Activated T-helper 1 cell treated with anti-CD3 and anti-CD28 coated beads, Interleukin-12 subunit alpha, Interleukin-12 subunit beta, Interleukin-2, Interleukin-4 antibody, amounts not matched to agents 30 ng/mL and 10 ng/mL and 1 ng/mL, durations not matched to agents 14 hours and 24 hours and 36 hours (primary cell): ENCODE measurements at regions of chr5 and their contacts with region 1.

Region 1: DNA sequence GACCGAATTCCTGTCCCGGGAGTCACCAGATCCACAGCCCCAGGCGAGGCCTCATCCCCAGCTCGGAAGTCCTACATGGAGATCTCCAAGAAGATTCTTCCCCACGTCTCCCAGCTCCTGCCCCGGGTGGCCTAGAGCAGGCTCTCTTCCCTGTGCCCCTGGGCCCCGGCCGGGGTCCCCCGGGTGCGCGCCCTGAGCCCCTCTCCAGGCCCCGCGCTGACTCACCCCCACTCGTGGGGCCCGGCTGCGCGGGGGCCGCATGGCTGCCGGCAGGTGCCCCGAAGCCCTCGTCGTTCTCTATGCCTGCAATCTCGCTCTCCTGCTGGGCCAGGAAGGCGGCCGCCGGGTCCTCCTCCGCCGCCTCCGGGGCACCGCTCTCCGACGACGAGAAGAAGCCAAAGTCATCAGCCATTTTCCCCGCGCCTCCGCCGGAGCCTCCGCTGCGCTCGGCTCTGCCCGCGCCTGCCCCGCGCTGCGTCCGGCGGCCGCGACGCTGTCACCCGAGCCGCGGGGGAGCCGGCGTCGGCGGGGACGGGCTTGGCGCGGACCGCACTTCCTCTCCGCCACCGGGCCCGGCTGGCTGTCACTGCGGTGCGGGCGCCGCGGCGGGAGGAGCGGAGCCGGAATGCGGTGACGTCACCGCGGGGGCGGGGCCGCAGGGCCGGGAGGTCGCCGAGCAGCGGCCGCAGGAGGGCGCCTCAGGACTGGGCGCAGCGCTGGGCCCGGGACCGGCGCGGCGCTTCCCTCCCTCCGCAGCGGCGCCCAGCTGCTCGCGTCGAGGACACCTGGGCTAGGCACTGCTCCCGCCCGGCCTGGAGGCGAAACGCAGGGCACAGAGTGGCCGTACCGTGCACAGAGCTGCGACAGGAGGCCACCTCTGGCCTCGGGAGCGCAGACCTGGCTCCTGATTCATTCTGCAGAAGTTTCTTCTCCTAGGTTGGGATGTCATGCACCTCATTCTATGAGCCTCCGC is at the start of gene CLTB:
- DNase-seq: peak; percentile 76
- H3K4me3 Mint-ChIP-seq: peak within 1 kb of the TSS; percentile 84
- H3K27ac Mint-ChIP-seq: peak within 1 kb of the TSS; percentile 44
- H3K4me1 Mint-ChIP-seq: peaks cover 38% of the 10 kb centered on the region
- H3K27me3 Mint-ChIP-seq: peaks cover 14% of the 10 kb centered on the region
- total RNA-seq, gene CLTB: 71.6 and 84.0 TPM in 2 replicates

Region 2: DNA sequence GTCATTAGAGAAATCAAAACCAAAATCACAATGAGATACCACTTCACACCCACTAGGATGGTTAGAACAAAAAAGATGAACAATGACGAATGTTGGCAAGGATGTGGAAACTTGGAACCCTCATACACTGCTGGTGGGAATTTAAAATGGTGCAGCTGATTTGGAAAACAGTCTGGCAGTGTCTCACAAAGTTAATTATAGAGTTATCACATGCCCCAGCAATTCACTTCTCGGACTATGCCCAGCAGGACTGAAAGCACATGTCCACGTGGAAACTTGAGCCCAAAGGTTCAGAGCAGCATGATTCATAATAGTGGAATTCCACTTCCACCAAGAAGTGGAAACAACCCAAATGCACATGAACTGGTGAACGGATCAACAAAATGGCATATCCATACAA is 843.4 kb before region 1 on chr5:
- intact Hi-C with region 1: no loop called
- DNase-seq: no peak
- H3K4me3 Mint-ChIP-seq: no peak overlapping the region
- H3K27ac Mint-ChIP-seq: no peak overlapping the region
- H3K4me1 Mint-ChIP-seq: peaks cover 8% of the 10 kb centered on the region
- H3K27me3 Mint-ChIP-seq: peaks cover 15% of the 10 kb centered on the region

Region 3: GRCh38 chr5:176361437-176362232 is 54.6 kb before region 1 on chr5 and contains the start of gene KIAA1191:
- intact Hi-C with region 1: loop called (anchors 2 kb)
- DNase-seq: peak; percentile 93
- H3K4me3 Mint-ChIP-seq: peak within 1 kb of the TSS; percentile 97
- H3K27ac Mint-ChIP-seq: peak within 1 kb of the TSS; percentile 91
- H3K4me1 Mint-ChIP-seq: peaks cover 36% of the 10 kb centered on the region
- H3K27me3 Mint-ChIP-seq: no peaks in the 10 kb centered on the region
- total RNA-seq, gene KIAA1191: 60.9 and 63.4 TPM in 2 replicates

Region 4: DNA sequence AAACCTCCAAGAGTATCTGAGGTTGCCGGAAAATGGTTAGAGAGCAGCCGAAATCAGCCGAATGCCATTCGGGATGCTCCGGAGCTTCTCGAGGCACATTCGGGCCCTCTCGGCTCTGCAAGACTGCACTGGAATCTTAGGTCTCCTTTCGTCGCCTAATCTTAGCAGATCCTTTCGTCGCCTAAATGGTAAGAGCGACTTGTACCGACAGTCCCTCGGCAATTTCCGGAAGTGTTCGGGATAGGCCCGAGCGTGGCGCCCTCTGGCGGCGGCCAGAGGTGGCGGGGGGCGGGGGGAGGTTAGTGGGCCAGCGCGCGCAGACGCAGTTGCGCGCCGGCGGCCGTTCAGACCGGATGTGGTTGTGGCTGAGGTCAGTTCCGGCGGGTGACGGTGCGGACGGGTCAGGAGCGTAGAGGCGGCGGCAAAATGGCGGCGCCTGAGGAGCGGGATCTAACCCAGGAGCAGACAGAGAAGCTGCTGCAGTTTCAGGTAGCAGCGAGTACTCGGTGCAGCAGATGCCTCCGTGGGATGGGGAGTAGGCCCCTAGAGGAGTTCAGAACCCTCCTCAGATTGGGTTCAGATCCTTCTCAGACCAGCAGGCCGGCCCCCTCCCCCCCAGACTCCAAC is 31.9 kb after region 1 on chr5 and contains the start of gene FAF2:
- intact Hi-C with region 1: loop called (anchors 1 kb)
- DNase-seq: peak; percentile 99
- H3K4me3 Mint-ChIP-seq: peak within 1 kb of the TSS; percentile 97
- H3K27ac Mint-ChIP-seq: peak within 1 kb of the TSS; percentile 96
- H3K4me1 Mint-ChIP-seq: peaks cover 40% of the 10 kb centered on the region
- H3K27me3 Mint-ChIP-seq: peaks cover 2% of the 10 kb centered on the region
- total RNA-seq, gene FAF2: 46.0 and 47.3 TPM in 2 replicates

Region 5: GRCh38 chr5:176543428-176544173 is 127.4 kb after region 1 on chr5:
- intact Hi-C with region 1: loop called (anchors 1 kb)
- DNase-seq: peak; percentile 74
- H3K4me3 Mint-ChIP-seq: peak overlapping the region; percentile 95
- H3K27ac Mint-ChIP-seq: peak overlapping the region; percentile 95
- H3K4me1 Mint-ChIP-seq: peaks cover 51% of the 10 kb centered on the region
- H3K27me3 Mint-ChIP-seq: no peaks in the 10 kb centered on the region

Region 6: DNA sequence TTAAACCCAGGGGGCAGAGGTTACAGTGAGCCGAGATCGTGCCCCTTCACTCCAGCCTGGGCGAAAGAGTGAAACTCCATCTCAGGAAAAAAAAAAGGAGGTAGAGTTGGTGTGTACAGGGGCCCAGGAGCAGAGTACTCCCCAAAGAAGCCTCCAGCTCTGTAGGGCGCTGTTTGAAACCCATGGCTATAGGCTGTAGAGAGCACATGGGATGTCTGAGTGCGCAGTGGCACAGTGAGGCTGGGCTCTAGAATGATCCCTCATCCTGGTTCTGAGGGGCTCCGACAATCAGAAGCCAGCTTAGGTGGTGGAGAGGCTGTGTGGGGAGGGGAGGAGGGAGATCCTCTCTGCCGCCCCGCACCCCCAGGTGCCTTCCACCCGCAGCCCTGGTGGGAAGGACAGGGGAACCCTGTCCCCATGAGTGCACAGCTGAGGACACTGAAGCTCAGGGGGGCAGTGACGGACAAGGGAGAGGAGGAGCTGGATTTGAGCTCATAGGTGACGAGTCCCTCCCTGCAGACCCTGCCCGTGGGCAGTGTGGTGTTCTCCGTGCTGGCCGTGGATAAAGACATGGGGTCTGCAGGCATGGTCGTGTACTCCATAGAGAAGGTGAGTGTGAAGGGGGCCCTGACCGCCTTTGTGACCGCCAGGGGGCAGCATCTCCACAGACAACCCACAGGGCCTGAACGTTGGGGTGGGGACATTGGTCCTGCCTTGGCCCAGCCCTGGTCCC is 157.5 kb after region 1 on chr5:
- intact Hi-C with region 1: loop called (anchors 1 kb)
- DNase-seq: peak; percentile 58
- H3K4me3 Mint-ChIP-seq: no peak overlapping the region
- H3K27ac Mint-ChIP-seq: no peak overlapping the region
- H3K4me1 Mint-ChIP-seq: no peaks in the 10 kb centered on the region
- H3K27me3 Mint-ChIP-seq: peaks cover 5% of the 10 kb centered on the region

Region 7: DNA sequence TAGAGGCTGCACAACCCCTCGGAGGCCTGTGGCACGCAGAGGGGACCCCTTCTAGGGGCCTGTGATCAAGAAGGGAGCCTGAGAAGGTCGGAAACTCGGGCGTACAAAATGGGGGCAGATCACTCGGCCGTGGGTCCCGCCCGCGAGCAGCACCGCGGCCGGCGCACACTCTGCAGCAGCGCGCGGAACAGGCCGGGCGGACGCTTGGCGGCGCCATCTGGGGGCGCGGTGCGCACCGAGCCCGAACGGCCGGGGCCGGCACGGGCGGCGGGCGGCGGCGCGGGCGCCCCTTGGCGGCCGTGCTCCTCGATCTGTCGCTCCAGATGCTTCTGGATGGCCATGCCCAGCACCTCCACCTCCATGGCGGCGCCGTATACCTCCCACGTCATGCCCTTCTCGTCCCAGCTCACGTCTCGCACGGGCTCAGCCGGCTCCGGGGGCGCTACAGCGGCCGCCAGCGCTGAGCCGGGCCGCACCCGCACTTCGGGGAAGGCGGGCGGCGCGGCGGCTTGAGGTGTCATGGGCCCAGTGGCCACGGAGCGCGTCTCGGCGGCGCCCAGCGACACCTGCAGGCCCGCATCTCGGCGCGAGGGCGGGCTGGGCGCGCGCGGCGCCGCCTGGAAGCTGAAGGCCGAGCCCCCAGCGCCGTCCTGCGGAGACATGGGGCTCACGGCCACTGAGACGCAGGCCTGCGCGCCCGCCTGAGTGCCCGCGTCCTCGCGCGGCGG is 180.6 kb after region 1 on chr5:
- intact Hi-C with region 1: loop called (anchors 2 kb)
- DNase-seq: peak; percentile 58
- H3K4me3 Mint-ChIP-seq: peak overlapping the region; percentile 74
- H3K27ac Mint-ChIP-seq: peak overlapping the region; percentile 58
- H3K4me1 Mint-ChIP-seq: peaks cover 8% of the 10 kb centered on the region
- H3K27me3 Mint-ChIP-seq: peaks cover 15% of the 10 kb centered on the region